GM12878 (cell line): ENCODE measurements at regions of chr16 and their contacts with region 1.

Region 1: DNA sequence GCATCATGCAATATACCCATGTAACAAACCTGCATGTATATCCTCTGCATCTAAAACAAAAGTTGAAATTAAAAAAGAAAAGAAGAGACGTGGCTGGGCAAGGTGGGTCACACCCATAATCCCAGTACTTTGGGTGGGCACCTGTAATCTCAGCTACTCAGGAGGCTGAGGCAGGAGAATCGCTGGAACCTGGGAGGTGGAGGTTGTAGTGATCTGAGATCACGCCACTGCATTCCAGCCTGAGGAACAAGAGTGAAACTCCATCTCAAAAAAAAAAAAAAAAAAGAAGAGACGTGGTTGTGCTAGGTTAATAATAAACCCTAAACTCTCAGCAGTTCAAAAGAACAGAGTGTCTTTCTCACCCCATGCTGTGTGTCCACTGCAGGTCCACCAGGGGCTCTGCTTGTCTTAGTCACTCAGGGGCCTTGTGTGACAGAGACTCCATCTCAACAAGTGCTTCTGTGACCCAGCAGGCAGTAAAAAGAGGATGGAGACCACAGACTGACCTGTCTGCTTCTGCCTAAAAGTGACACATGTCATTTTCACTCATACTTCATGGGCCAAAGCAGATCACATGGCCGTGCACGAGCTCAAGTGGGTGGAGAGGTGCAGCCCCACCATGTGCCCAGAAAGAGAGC is 22.3 kb upstream of the N4BP1 start:
- DNase-seq: no peak
- ATAC-seq: peak; percentile 57
- H3K4me3 ChIP-seq: no peak overlapping the region
- H3K27ac ChIP-seq: no peak overlapping the region
- H3K4me1 ChIP-seq: peaks cover 4% of the 10 kb centered on the region
- H3K27me3 ChIP-seq: no peaks in the 10 kb centered on the region
- CTCF ChIP-seq: no peak
- EP300 ChIP-seq: no peak
- POLR2A ChIP-seq: no peak
- RAD21 ChIP-seq: no peak

Region 2: DNA sequence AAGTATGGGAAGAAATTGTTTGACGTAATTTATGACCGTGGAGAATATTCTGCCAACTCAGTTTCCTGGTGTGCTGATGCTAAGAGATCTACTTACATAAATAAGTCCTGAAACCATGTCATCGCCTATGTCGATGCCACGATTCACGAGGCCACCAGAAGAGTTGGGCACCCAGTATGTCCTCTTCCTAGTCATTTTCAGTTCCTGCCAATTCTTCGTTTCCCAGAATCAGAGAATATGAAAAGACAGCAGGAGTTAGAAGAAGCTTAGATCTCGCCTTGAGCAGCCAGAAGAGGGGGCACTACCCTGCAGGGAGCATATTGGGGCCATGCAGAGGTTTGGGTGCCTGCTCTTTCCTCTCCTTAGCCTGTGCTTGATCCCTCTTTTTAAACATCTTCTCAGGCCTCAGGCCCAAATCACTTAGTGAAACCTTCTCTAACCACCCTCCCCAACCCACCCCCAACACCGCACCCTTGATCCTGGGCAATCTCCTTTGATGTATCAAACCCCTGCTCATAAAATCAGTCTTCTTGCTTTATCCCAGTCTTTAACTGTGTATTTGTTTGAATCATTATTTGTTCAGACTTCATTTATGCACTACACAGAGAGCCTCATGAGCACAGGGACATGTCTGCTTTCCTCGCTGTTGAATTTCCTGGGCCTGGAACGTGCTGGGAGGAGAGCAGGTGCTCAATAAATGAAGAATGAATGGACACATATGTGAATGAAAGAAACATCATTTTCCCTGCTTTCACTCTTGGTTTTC is 400.3 kb before region 1 on chr16:
- CTCF ChIA-PET with region 1: interaction called, 47 read pairs
- POLR2A ChIA-PET with region 1: no interaction called
- RAD21 ChIA-PET with region 1: interaction called, 30 read pairs
- SMC1A ChIA-PET with region 1: interaction called, 23 read pairs
- in situ Hi-C with region 1: loop called (anchors 5 kb)
- intact Hi-C with region 1: no loop called
- DNase-seq: no peak
- ATAC-seq: peak; percentile 93
- H3K4me3 ChIP-seq: no peak overlapping the region
- H3K27ac ChIP-seq: no peak overlapping the region
- H3K4me1 ChIP-seq: peaks cover 3% of the 10 kb centered on the region
- H3K27me3 ChIP-seq: no peaks in the 10 kb centered on the region
- CTCF ChIP-seq: peak; percentile 61 to 62 (median 62); a peak in 5 of 6 replicates
- EP300 ChIP-seq: no peak
- POLR2A ChIP-seq: no peak
- RAD21 ChIP-seq: peak; percentile 75

Region 3: DNA sequence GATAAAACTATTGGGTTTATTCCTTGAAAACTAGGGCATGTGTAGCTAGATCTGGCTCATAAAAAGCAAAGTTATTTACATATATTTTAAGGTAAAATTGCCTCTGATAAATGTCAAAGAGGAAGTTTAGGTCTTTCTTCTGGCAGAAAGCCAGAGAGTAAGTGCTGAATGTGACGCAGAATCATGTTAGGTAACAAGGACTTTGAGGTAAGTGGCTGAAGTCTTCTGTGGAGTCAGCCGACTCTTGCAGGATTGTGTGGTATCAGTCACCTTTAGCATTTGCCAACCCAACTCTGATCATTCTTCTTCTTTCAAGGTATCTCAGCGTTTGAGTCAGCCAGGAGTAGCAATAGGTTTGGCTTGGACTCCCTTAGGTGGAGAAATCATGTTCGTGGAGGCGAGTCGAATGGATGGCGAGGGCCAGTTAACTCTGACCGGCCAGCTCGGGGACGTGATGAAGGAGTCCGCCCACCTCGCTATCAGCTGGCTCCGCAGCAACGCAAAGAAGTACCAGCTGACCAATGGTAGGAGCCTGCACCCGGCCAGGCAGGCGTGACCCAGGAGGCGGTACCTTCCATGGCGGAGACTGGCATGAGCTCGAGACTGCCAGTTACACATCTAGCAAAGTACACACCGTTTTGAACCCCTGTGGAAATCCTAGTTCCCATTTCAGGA is 284.9 kb before region 1 on chr16:
- CTCF ChIA-PET with region 1: interaction called, 11 read pairs
- POLR2A ChIA-PET with region 1: no interaction called
- RAD21 ChIA-PET with region 1: interaction called, 32 read pairs
- SMC1A ChIA-PET with region 1: interaction called, 3 read pairs
- in situ Hi-C with region 1: loop called (anchors 5 kb)
- intact Hi-C with region 1: no loop called
- DNase-seq: no peak
- ATAC-seq: no peak
- H3K4me3 ChIP-seq: no peak overlapping the region
- H3K27ac ChIP-seq: no peak overlapping the region
- H3K4me1 ChIP-seq: no peaks in the 10 kb centered on the region
- H3K27me3 ChIP-seq: no peaks in the 10 kb centered on the region
- CTCF ChIP-seq: no peak
- EP300 ChIP-seq: no peak
- POLR2A ChIP-seq: no peak
- RAD21 ChIP-seq: no peak

Region 4: DNA sequence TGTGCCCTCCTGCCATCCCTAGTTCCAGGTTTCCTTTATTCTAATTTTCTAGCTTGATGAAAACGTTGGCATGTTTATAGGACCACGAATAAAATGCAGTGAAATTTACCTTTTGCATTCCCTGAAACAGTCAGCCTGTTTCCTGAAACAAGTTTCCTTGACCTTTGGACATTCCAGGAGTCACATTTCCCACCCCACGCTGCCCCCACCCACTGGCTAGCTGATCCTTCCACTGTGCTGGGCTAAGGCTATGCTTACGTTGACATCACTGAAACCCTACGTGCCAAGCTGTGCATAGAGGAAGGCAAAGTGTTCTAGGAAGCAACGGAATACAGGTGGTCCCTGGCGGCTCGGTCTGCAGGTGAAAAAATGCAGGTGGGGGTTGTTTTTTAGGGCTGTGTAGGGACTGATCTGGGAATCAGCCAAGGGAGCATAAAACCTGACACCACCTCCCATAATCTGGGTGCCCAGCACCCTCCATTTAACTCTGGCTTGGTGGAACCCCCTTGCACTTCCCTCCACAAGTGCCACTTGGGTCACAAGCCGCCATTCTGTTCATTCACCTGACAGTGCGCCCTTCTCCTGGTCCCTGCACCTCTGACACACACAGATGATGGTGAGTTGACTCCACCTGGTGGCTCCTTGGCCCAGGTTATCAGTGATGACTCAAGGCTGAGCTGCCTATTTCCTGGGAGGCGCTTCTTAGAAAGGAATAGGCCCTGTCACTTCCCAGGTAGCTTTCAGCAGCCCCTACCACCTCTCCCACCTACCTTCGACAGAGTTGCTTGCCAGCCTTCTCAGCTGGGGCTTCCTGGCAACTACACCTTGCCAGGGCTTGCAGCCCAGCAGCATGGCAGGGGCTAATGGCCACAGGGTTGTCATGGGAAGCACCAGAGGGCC is 105.9 kb before region 1 on chr16:
- CTCF ChIA-PET with region 1: interaction called, 62 read pairs
- POLR2A ChIA-PET with region 1: no interaction called
- RAD21 ChIA-PET with region 1: interaction called, 7 read pairs
- SMC1A ChIA-PET with region 1: interaction called, 11 read pairs
- in situ Hi-C with region 1: no loop called
- intact Hi-C with region 1: no loop called
- DNase-seq: peak; percentile 40
- ATAC-seq: peak; percentile 94
- H3K4me3 ChIP-seq: no peak overlapping the region
- H3K27ac ChIP-seq: no peak overlapping the region
- H3K4me1 ChIP-seq: 0 out of 2 replicates have a peak, but pooled peaks cover 5% of the 10 kb centered on the region
- H3K27me3 ChIP-seq: no peaks in the 10 kb centered on the region
- CTCF ChIP-seq: peak; percentile 53 to 75 (median 54); a peak in 4 of 6 replicates
- EP300 ChIP-seq: no peak
- POLR2A ChIP-seq: no peak
- RAD21 ChIP-seq: peak; percentile 90

Region 5: GRCh38 chr16:48603647-48604376 is 28.4 kb before region 1 on chr16:
- CTCF ChIA-PET with region 1: interaction called, 17 read pairs
- POLR2A ChIA-PET with region 1: no interaction called
- RAD21 ChIA-PET with region 1: interaction called, 6 read pairs
- SMC1A ChIA-PET with region 1: interaction called, 3 read pairs
- in situ Hi-C with region 1: no loop called
- intact Hi-C with region 1: no loop called
- DNase-seq: no peak
- ATAC-seq: no peak
- H3K4me3 ChIP-seq: peak overlapping the region; percentile 13; the same call in 1 of the 2 replicates
- H3K27ac ChIP-seq: no peak overlapping the region
- H3K4me1 ChIP-seq: peaks cover 22% of the 10 kb centered on the region
- H3K27me3 ChIP-seq: no peaks in the 10 kb centered on the region
- CTCF ChIP-seq: no peak
- EP300 ChIP-seq: no peak
- POLR2A ChIP-seq: no peak
- RAD21 ChIP-seq: no peak

Region 6: DNA sequence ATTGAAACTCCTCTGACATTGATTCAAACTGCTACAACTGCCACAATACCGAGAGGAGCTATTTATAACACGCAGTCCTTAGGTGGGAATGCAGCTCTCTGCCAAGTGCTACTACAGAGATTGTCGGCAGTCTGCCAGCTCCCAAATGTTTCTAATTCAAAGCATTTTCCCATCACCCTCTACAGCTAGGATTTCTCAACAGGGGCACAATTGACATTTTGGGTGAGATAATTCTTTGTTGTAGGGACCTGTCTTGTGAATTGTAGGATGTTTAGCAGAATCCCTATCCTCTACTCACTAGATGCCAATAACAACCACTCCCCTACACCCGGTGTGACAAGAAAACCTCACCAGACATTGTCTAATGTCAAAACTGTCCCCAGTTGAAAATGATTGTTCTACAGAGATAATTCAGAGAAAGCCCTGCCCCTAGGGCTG is 14.5 kb before region 1 on chr16:
- CTCF ChIA-PET with region 1: interaction called, 27 read pairs
- POLR2A ChIA-PET with region 1: no interaction called
- RAD21 ChIA-PET with region 1: interaction called, 9 read pairs
- SMC1A ChIA-PET with region 1: interaction called, 5 read pairs
- in situ Hi-C with region 1: no loop called
- intact Hi-C with region 1: no loop called
- DNase-seq: no peak
- ATAC-seq: no peak
- H3K4me3 ChIP-seq: no peak overlapping the region
- H3K27ac ChIP-seq: no peak overlapping the region
- H3K4me1 ChIP-seq: peaks cover 14% of the 10 kb centered on the region
- H3K27me3 ChIP-seq: no peaks in the 10 kb centered on the region; a peak in 1 of 4 replicates
- CTCF ChIP-seq: no peak
- EP300 ChIP-seq: no peak
- POLR2A ChIP-seq: no peak
- RAD21 ChIP-seq: no peak